ENCODE measurements at regions of chr7 and their contacts with region 1.

Region 1: DNA sequence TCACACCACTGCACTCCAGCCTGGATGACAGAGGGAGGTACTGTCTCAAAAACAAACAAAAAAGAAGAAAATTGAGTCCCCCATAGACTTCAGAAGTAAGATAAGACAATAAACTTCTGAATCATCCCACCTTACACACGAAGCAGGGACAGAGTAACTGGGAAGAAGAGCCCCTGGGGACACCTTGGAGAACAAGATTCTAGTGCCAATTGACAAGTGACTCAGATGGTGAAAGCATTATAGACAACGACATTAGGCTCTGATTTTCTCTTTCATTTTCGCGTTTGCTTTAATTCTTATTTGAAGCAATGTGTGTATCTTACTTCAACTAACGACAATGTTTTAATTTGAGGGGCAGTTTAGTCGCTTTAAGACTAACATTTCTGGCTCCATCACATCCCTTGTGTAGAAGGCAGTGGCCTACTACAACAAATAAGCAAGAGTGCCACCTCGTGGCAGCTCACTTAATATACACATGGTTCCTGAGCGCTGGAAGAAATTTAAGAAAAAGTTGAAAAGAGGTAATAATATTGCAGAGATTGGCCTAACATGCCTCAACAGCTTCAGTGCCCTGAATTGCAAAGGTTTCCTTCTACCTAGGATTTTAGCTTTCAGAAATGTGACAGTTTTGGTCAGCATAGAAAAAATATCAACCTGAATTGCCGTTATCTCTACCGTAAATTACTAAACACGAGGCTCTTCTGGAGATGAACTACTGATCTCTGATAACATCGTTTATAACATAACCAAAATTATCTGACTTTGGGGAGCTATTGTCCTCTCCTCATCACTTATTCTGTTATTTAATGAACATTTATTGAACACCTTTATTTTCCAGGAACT is 36.7 kb downstream of the ASNS start:
- DNase-seq: peak; percentile 70
- H3K4me3 ChIP-seq: no peak overlapping the region
- H3K27ac ChIP-seq: no peak overlapping the region
- H3K4me1 ChIP-seq: no peaks in the 10 kb centered on the region
- H3K27me3 ChIP-seq: no peaks in the 10 kb centered on the region
- CTCF ChIP-seq: peak; percentile 68

Region 2: DNA sequence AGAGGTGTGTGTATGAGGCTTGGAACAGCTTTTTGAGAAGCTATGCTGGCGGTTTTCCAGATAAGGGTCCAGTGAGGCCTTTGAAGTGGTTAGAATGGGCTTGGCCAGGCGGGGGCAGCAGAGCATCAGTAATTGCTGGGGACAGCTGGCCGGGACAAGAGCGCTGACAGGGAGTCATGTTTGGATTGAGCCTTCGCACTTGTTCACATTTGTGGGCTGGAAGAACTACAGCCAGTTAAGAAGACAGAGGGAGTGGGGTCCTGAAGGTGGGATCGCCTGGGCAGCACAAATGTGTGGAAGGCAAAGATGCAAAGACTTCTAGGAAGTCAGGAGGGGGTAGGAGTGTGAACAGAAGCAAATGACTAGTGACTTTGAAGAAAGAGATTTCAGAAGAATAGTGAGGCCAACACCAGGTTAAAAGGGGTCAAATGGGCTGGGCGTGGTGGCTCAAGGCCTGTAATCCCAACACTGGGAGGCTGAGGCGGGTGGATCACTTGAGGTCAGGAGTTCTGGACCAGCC is 730.7 kb before region 1 on chr7:
- intact Hi-C with region 1: loop called (anchors 2 kb)
- DNase-seq: peak; percentile 84
- H3K4me3 ChIP-seq: no peak overlapping the region
- H3K27ac ChIP-seq: no peak overlapping the region
- H3K4me1 ChIP-seq: no peaks in the 10 kb centered on the region
- H3K27me3 ChIP-seq: no peaks in the 10 kb centered on the region
- CTCF ChIP-seq: peak; percentile 85

Region 3: DNA sequence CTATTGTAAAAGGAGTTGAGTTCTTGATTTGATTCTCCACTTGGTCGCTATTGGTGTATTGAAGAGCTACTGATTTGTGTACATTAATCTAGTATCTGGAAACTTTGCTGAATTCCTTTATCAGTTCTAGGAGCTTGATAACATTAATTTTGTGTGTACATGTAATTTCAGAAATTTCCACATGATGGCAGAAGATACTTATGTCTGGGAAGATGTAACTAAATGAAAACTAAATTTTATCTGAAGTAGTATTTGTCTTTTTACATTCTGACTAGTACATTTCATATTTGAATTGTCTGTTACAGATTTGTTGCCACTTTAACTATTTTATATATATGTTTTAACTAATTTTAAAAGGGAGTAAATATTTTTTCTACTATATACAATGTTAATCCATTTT is 690.4 kb before region 1 on chr7:
- intact Hi-C with region 1: loop called (anchors 5 kb)
- DNase-seq: no peak
- H3K4me3 ChIP-seq: no peak overlapping the region
- H3K27ac ChIP-seq: no peak overlapping the region
- H3K4me1 ChIP-seq: no peaks in the 10 kb centered on the region
- H3K27me3 ChIP-seq: no peaks in the 10 kb centered on the region
- CTCF ChIP-seq: peak; percentile 47

Region 4: GRCh38 chr7:97499204-97499603 is 336.3 kb before region 1 on chr7:
- intact Hi-C with region 1: loop called (anchors 5 kb)
- DNase-seq: peak; percentile 27
- H3K4me3 ChIP-seq: no peak overlapping the region
- H3K27ac ChIP-seq: no peak overlapping the region
- H3K4me1 ChIP-seq: no peaks in the 10 kb centered on the region
- H3K27me3 ChIP-seq: no peaks in the 10 kb centered on the region
- CTCF ChIP-seq: peak; percentile 38